Activated CD4-positive, alpha-beta T cell treated with anti-CD3 and anti-CD28 coated beads for 36 hours (primary cell): ENCODE measurements at regions of chr20 and their contacts with region 1.

Region 1: DNA sequence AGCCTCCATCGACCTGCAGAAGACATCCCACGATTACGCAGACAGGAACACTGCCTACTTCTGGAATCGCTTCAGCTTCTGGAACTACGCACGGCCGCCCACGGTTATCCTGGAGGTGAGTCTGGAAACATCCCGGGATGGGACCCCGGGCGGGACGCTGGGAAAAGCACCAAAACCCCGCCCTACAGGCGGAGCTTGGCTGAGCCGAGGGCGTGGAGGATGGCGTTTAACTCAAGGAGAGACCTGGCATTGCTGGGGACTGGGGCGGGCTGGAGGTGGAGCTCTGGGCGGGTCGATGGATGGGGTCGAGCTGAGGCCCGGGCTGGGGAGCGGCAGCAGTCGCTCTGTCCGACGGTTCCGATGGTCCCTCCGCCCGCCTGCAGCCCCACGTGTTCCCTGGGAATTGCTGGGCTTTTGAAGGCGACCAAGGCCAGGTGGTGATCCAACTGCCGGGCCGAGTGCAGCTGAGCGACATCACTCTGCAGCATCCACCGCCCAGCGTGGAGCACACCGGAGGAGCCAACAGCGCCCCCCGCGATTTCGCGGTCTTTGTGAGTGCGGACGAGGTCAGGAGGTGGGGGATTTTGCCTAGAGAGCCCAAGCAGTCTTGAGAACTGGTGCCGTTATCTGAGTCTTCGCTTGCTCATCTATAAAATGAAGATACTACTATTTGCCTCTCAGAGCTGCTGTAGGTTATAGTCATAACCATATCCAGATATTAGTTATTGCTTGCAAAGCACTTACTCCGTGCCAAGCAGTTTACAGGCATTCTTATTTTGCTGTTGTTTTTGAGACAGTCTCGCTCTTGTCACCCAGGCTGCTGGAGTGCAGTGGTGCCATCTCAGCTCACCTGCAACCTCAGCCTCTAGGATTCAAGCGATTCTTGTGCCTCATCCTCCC is 3.8 kb downstream of the SPAG4 start:
- DNase-seq: peak; percentile 93
- ATAC-seq: peak; percentile 51
- H3K4me3 Mint-ChIP-seq: peak overlapping the region; percentile 83
- H3K27ac Mint-ChIP-seq: peak overlapping the region; percentile 92
- H3K4me1 Mint-ChIP-seq: peaks cover 48% of the 10 kb centered on the region
- H3K27me3 Mint-ChIP-seq: peaks cover 2% of the 10 kb centered on the region

Region 2: DNA sequence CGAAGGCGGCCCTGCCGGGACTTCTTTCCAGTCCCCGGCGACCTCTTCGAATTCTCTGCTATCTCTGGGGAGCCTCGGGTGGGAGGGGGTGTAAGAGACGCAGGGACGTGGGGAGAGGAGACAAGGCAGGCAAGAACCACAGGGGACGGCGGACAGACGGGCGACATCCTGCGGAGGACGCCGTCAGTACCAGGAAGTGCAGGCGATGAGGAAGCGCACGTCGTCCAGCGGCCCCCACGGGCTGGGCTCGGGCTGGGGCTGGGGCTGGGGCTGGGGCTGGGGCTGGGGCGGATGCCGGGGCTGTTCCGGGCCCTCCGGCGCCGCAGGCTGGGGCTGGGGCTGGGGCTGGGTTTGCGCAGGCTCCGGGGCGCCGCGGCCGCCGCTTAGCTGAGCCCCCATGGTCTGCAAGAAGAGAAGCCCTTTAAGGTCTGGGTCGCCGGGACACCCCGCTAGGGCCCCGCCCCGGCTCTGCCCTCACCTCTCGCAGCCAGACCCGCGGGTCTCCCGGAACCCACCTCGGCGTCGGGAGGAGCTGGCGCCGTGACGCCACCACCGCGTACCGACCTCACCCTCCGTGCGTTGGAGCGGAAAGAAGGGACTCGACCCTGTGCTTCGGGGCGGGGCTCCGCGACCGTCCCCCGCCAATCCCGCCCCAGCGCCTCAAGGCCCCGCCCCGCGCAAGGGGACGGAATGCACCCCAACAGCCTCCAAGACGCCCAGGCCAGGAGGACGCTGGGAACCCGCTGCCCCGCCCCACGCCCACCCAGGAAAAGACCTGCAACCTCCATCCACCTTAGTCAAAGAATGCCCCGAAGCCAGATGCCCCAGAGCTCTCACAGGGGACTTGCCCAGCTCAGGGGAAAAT is 341.7 kb before region 1 on chr20 and contains the start of gene MMP24OS:
- CTCF ChIA-PET with region 1: no interaction called
- POLR2A ChIA-PET with region 1: no interaction called
- intact Hi-C with region 1: loop called in 1 of 2 experiments (anchors 2 kb)
- DNase-seq: peak; percentile 94
- ATAC-seq: peak; percentile 96
- H3K4me3 Mint-ChIP-seq: peak within 1 kb of the TSS; percentile 99
- H3K27ac Mint-ChIP-seq: peak within 1 kb of the TSS; percentile 97
- H3K4me1 Mint-ChIP-seq: peaks cover 9% of the 10 kb centered on the region
- H3K27me3 Mint-ChIP-seq: no peaks in the 10 kb centered on the region
- total RNA-seq, gene MMP24OS: 44.6 to 56.8 TPM

Region 3: GRCh38 chr20:35541783-35542588 is 77.5 kb before region 1 on chr20 and contains the start of gene ERGIC3:
- CTCF ChIA-PET with region 1: interaction called, 3 read pairs
- POLR2A ChIA-PET with region 1: interaction called, 3 read pairs
- intact Hi-C with region 1: loop called (anchors 1 to 5 kb)
- DNase-seq: peak; percentile 99
- ATAC-seq: peak; percentile 99
- H3K4me3 Mint-ChIP-seq: peak within 1 kb of the TSS; percentile 83
- H3K27ac Mint-ChIP-seq: peak within 1 kb of the TSS; percentile 83
- H3K4me1 Mint-ChIP-seq: peaks cover 15% of the 10 kb centered on the region
- H3K27me3 Mint-ChIP-seq: no peaks in the 10 kb centered on the region
- total RNA-seq, gene ERGIC3: 109 to 127 TPM

Region 4: GRCh38 chr20:35635652-35636051 is 16.2 kb after region 1 on chr20:
- CTCF ChIA-PET with region 1: interaction called, 16 read pairs
- POLR2A ChIA-PET with region 1: interaction called, 3 read pairs
- intact Hi-C with region 1: no loop called
- DNase-seq: no peak
- ATAC-seq: no peak
- H3K4me3 Mint-ChIP-seq: no peak overlapping the region
- H3K27ac Mint-ChIP-seq: peak overlapping the region; percentile 68
- H3K4me1 Mint-ChIP-seq: peaks cover 37% of the 10 kb centered on the region
- H3K27me3 Mint-ChIP-seq: no peaks in the 10 kb centered on the region

Region 5: GRCh38 chr20:35741892-35742740 is 122.7 kb after region 1 on chr20 and contains the start of gene RBM39:
- CTCF ChIA-PET with region 1: interaction called, 9 read pairs
- POLR2A ChIA-PET with region 1: interaction called, 21 read pairs
- intact Hi-C with region 1: loop called (anchors 1 kb)
- DNase-seq: peak; percentile 100
- ATAC-seq: peak; percentile 88
- H3K4me3 Mint-ChIP-seq: peak within 1 kb of the TSS; percentile 90
- H3K27ac Mint-ChIP-seq: peak within 1 kb of the TSS; percentile 100
- H3K4me1 Mint-ChIP-seq: peaks cover 45% of the 10 kb centered on the region
- H3K27me3 Mint-ChIP-seq: no peaks in the 10 kb centered on the region
- total RNA-seq, gene RBM39: 303 to 356 TPM

Region 6: GRCh38 chr20:36064658-36065426 is 445.4 kb after region 1 on chr20:
- CTCF ChIA-PET with region 1: no interaction called
- POLR2A ChIA-PET with region 1: no interaction called
- intact Hi-C with region 1: loop called in 1 of 2 experiments (anchors 1 kb)
- DNase-seq: peak; percentile 95
- ATAC-seq: peak; percentile 98
- H3K4me3 Mint-ChIP-seq: peak overlapping the region; percentile 76
- H3K27ac Mint-ChIP-seq: no peak overlapping the region
- H3K4me1 Mint-ChIP-seq: no peaks in the 10 kb centered on the region
- H3K27me3 Mint-ChIP-seq: peaks cover 8% of the 10 kb centered on the region